Activated CD4-positive, alpha-beta T cell treated with anti-CD3 and anti-CD28 coated beads, Interleukin-2, amount 10 ng/mL, durations not matched to agents 24 days and 14 days (primary cell): ENCODE measurements at regions of chr6 and their contacts with region 1.

Region 1: GRCh38 chr6:46011241-46012085 is 4.2 kb downstream of the CLIC5 start:
- DNase-seq: peak; percentile 91
- H3K4me3 Mint-ChIP-seq: peak overlapping the region; percentile 64
- H3K27ac Mint-ChIP-seq: peak overlapping the region; percentile 79
- H3K4me1 Mint-ChIP-seq: peaks cover 52% of the 10 kb centered on the region
- H3K27me3 Mint-ChIP-seq: peaks cover 9% of the 10 kb centered on the region

Region 2: GRCh38 chr6:45001663-45002062 is 1009.8 kb before region 1 on chr6:
- intact Hi-C with region 1: loop called (anchors 5 kb)
- DNase-seq: peak; percentile 78
- H3K4me3 Mint-ChIP-seq: peak overlapping the region; percentile 39
- H3K27ac Mint-ChIP-seq: peak overlapping the region; percentile 84
- H3K4me1 Mint-ChIP-seq: peaks cover 29% of the 10 kb centered on the region
- H3K27me3 Mint-ChIP-seq: no peaks in the 10 kb centered on the region

Region 3: DNA sequence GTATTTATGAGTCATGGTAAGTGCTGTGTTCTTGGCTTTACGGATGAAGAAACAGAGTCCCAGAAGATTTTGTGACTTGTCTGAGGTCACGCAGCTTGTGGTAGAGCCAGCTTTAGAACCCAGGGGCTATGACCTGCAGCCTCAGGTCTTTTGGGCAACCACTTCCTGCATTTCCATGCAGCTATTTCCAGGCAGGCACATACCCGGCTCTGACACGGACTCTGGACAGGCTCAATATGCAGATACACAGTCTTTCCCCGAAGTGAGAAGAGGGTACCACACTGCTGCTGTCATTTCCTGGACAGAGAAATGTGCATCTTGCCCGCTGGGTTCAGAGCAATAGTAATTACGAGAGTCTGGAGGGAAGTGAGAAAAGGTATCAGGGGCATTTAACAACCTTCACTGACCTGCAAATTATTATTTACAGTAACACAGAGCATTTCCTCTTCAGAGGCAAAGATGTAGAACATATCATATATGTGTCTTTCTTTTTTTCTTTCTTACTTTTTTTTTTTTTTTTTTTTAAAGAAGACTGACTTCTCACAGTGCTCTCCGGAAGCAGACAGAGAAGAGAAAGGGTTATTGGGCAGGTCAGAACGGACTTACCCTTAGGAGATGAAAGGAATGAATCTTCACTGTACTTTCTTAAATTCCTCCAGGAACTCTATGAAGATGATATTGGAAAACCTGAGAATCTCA is 180.9 kb before region 1 on chr6:
- intact Hi-C with region 1: loop called (anchors 10 kb)
- DNase-seq: peak; percentile 82
- H3K4me3 Mint-ChIP-seq: peak overlapping the region; percentile 76
- H3K27ac Mint-ChIP-seq: peak overlapping the region; percentile 91
- H3K4me1 Mint-ChIP-seq: peaks cover 38% of the 10 kb centered on the region
- H3K27me3 Mint-ChIP-seq: no peaks in the 10 kb centered on the region

Region 4: GRCh38 chr6:46129629-46130511 is 118.4 kb after region 1 on chr6 and contains the start of gene ENPP4:
- intact Hi-C with region 1: loop called (anchors 5 kb)
- DNase-seq: peak; percentile 98
- H3K4me3 Mint-ChIP-seq: peak within 1 kb of the TSS; percentile 89
- H3K27ac Mint-ChIP-seq: peak within 1 kb of the TSS; percentile 83
- H3K4me1 Mint-ChIP-seq: peaks cover 20% of the 10 kb centered on the region
- H3K27me3 Mint-ChIP-seq: peaks cover 5% of the 10 kb centered on the region
- total RNA-seq, gene ENPP4: 5.3 and 6.0 TPM in 2 replicates

Region 5: GRCh38 chr6:46175446-46175845 is 164.0 kb after region 1 on chr6:
- intact Hi-C with region 1: loop called (anchors 5 kb)
- DNase-seq: peak; percentile 76
- H3K4me3 Mint-ChIP-seq: no peak overlapping the region
- H3K27ac Mint-ChIP-seq: no peak overlapping the region
- H3K4me1 Mint-ChIP-seq: peaks cover 18% of the 10 kb centered on the region
- H3K27me3 Mint-ChIP-seq: peaks cover 67% of the 10 kb centered on the region